Heart right ventricle (tissue), 16 donors: ENCODE measurements at regions of chr12 and their contacts with region 1.

Region 1: DNA sequence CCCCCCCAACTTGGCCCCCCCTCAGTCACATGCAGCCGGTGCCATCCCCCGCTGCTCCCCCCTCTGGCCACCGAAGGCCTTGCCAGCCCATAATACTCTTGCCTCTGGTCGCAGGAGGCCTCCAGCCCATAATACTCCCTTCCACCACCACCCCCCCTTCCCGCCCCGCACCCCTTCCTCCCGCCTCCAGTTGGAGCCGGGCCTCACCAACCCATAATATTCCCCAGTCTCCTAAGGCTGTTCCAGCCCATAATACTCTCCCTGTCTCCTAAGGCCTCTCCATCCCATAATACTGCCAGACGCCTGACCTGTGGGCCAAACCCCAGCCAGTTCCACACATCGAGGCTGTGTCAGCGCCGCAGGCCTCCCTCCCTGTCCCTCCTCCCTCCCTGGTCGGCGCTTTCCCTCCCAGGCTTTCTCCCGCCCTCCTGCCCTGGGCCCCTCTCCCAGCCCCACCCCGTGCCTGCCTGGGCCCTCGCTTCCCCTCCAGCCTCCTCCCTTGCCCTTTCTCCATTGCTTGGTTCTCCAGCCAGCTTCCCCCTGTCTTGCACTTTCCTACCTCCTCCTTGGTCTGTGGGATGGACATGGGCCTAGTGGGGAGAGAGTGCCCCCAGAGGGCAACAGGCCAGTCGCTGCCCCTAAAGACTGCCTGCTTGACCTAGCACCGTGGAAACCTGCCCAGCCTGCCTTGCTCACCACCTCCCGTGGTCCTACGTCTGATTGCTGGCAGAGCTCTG is 6.8 kb upstream of the CHD4 start:
- DNase-seq: peak; percentile 89 to 94
- ATAC-seq: peak; percentile 83 to 88 (median 88)
- H3K4me3 ChIP-seq: peak overlapping the region in 1 of 10 donors; percentile 38
- H3K27ac ChIP-seq: peak overlapping the region; percentile 50 to 96 (median 94)
- H3K4me1 ChIP-seq: peaks cover 16 to 42% (median 26%) of the 10 kb centered on the region in 9 donors
- H3K27me3 ChIP-seq: no peaks in the 10 kb centered on the region
- CTCF ChIP-seq: peak in 2 of 9 donors; percentile 6 to 21

Region 2: GRCh38 chr12:6644903-6645302 is 31.0 kb after region 1 on chr12:
- intact Hi-C with region 1: loop called in 3 of 10 experiments (anchors 1 to 5 kb)
- DNase-seq: peak; percentile 32 to 37
- ATAC-seq: no peak
- H3K4me3 ChIP-seq: no peak overlapping the region
- H3K27ac ChIP-seq: peak overlapping the region in 4 of 10 donors; percentile 6 to 84 (median 36)
- H3K4me1 ChIP-seq: peaks cover 0 to 35% (median 9%) of the 10 kb centered on the region in 9 donors
- H3K27me3 ChIP-seq: no peaks in the 10 kb centered on the region
- CTCF ChIP-seq: peak in 5 of 9 donors; percentile 25 to 49 (median 47)

Region 3: GRCh38 chr12:6662906-6663742 is 49.2 kb after region 1 on chr12 and contains the start of gene ING4:
- intact Hi-C with region 1: loop called in 5 of 10 experiments (anchors 5 kb)
- DNase-seq: peak; percentile 94 to 99
- ATAC-seq: peak; percentile 99 to 100 (median 100)
- H3K4me3 ChIP-seq: peak within 1 kb of the TSS; percentile 62 to 92 (median 82)
- H3K27ac ChIP-seq: peak within 1 kb of the TSS; percentile 5 to 88 (median 78)
- H3K4me1 ChIP-seq: peaks cover 0 to 32% (median 15%) of the 10 kb centered on the region in 9 donors
- H3K27me3 ChIP-seq: no peaks in the 10 kb centered on the region
- CTCF ChIP-seq: no peak
- total RNA-seq, gene ING4: 17.7 to 32.5 (median 22.6) TPM

Region 4: GRCh38 chr12:6697584-6698351 is 83.8 kb after region 1 on chr12:
- intact Hi-C with region 1: loop called in 1 of 10 experiments (anchors 10 kb)
- DNase-seq: no peak
- ATAC-seq: peak in 7 of 8 donors; percentile 39 to 73 (median 54)
- H3K4me3 ChIP-seq: no peak overlapping the region
- H3K27ac ChIP-seq: no peak overlapping the region
- H3K4me1 ChIP-seq: peaks cover 3 to 16% (median 11%) of the 10 kb centered on the region in 9 donors
- H3K27me3 ChIP-seq: peaks cover 12 to 78% (median 60%) of the 10 kb centered on the region in 7 donors
- CTCF ChIP-seq: peak in 8 of 9 donors; percentile 11 to 57 (median 40)

Region 5: GRCh38 chr12:6825398-6826124 is 211.6 kb after region 1 on chr12:
- intact Hi-C with region 1: loop called in 6 of 10 experiments (anchors 5 to 10 kb)
- DNase-seq: peak; percentile 87 to 89
- ATAC-seq: peak; percentile 54 to 73 (median 62)
- H3K4me3 ChIP-seq: peak overlapping the region in 5 of 10 donors; percentile 17 to 39 (median 25)
- H3K27ac ChIP-seq: peak overlapping the region in 1 of 10 donors; percentile 18
- H3K4me1 ChIP-seq: peaks cover 15 to 65% (median 45%) of the 10 kb centered on the region in 9 donors
- H3K27me3 ChIP-seq: peaks cover 0 to 59% (median 0%) of the 10 kb centered on the region in 7 donors
- CTCF ChIP-seq: peak; percentile 80 to 97 (median 95)